HCT116 (cell line): ENCODE measurements at regions of chr1 and their contacts with region 1.

Region 1: DNA sequence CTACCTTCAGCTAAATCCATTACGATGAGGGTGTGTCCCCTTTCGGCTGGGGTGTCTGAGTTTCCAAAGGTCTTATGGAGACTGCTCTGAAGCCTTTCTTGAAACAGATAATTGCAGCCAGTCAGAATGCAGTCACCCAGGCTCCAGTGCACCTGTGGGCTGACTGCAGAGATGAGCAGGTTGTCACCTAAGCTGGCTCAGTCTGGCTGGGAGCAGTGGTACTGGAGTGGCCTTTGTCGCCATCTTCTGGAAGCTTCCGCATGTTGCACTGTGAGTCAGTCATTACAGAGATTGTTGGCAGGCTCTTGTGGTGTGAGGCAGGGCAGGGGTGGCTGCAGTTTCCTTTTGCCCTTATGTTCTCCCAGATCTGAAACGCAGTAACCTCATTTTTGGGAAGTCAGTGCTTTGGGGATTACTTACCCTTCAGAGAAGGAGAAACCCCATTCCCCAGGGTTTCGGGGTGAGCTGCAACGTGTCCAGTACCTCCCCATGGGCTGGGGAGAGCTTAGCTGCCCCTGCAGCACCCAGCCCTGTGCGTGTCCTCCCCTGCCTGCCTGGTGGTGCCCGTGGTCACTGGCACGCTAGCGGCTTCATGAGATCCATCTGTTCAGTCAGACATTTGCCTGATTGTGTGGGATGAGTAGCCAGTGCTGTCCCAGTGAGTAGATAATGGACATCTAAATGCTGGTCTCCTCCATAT is 48.0 kb downstream of the SMYD2 start:
- DNase-seq: peak; percentile 54
- ATAC-seq: peak; percentile 85
- H3K4me3 ChIP-seq: no peak overlapping the region
- H3K27ac ChIP-seq: no peak overlapping the region
- H3K4me1 ChIP-seq: no peaks in the 10 kb centered on the region
- H3K27me3 ChIP-seq: no peaks in the 10 kb centered on the region
- CTCF ChIP-seq: peak; percentile 84 to 91 (median 87)
- POLR2A ChIP-seq: no peak
- RAD21 ChIP-seq: peak; percentile 97

Region 2: GRCh38 chr1:213244664-213245091 is 1084.2 kb before region 1 on chr1:
- CTCF ChIA-PET with region 1: no interaction called
- POLR2A ChIA-PET with region 1: no interaction called
- RAD21 ChIA-PET with region 1: no interaction called
- intact Hi-C with region 1: loop called (anchors 5 kb)
- DNase-seq: peak; percentile 13
- ATAC-seq: no peak
- H3K4me3 ChIP-seq: no peak overlapping the region
- H3K27ac ChIP-seq: no peak overlapping the region
- H3K4me1 ChIP-seq: no peaks in the 10 kb centered on the region
- H3K27me3 ChIP-seq: no peaks in the 10 kb centered on the region
- CTCF ChIP-seq: peak; percentile 54 to 82 (median 62); a peak in 5 of 6 replicates
- POLR2A ChIP-seq: no peak
- RAD21 ChIP-seq: peak; percentile 77

Region 3: DNA sequence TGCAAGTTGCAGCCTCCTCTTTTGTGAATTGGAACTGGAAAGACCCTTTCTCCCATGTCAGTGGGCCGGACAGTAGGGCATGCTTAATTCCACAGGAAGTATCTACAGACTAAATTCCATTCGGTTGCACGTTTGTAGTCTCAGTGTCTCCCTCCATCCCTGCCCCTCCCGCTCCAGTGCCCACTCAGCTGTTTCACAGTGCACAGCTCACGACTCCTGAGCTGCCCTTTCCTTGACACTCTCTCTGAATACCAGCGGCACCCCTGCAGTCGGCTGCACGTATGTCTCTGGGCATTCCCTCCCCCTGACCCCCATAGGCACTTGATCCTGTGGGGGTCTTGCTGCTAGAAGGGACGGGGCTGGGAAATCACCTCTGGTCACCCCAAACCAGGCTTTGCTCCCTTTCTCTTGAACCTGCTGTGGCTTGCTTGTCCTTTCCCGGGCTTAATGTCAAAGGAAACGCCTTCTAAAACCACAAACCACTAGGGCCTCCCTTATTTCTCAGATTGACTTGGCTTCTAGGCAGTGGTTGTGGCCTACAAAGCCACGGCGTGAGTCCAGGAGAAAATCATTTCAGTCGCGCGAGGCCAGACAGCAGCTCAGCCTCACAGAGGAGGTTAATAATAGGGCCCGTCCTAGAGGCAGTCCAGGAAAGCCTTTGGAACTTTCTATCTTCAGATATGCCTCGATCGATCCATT is 706.4 kb before region 1 on chr1:
- CTCF ChIA-PET with region 1: no interaction called
- POLR2A ChIA-PET with region 1: no interaction called
- RAD21 ChIA-PET with region 1: no interaction called
- intact Hi-C with region 1: no loop called
- DNase-seq: no peak
- ATAC-seq: no peak
- H3K4me3 ChIP-seq: no peak overlapping the region
- H3K27ac ChIP-seq: no peak overlapping the region
- H3K4me1 ChIP-seq: no peaks in the 10 kb centered on the region
- H3K27me3 ChIP-seq: no peaks in the 10 kb centered on the region
- CTCF ChIP-seq: no peak
- POLR2A ChIP-seq: no peak
- RAD21 ChIP-seq: no peak

Region 4: DNA sequence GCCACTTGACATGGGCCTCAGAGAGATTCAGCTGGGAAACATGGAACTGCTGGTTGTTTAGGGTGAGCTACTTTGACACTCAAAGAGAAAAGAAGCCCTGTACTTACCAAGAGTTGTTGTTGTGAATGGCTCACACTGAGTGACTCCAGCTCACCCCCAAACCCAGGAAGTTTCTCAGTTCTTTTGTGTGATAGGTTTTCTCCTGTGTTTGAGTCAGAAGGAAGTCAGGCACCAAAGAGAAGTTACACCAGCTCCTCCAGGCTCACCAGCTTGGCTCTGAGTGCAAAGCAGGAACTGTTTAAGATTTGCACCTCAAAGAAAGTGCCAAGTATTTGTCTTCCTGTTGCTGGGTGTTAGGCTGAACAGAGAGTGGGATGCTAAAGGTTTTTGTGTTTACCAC is 452.4 kb before region 1 on chr1:
- CTCF ChIA-PET with region 1: no interaction called
- POLR2A ChIA-PET with region 1: no interaction called
- RAD21 ChIA-PET with region 1: no interaction called
- intact Hi-C with region 1: no loop called
- DNase-seq: no peak
- ATAC-seq: no peak
- H3K4me3 ChIP-seq: no peak overlapping the region
- H3K27ac ChIP-seq: no peak overlapping the region
- H3K4me1 ChIP-seq: no peaks in the 10 kb centered on the region
- H3K27me3 ChIP-seq: no peaks in the 10 kb centered on the region
- CTCF ChIP-seq: no peak
- POLR2A ChIP-seq: no peak
- RAD21 ChIP-seq: no peak

Region 5: DNA sequence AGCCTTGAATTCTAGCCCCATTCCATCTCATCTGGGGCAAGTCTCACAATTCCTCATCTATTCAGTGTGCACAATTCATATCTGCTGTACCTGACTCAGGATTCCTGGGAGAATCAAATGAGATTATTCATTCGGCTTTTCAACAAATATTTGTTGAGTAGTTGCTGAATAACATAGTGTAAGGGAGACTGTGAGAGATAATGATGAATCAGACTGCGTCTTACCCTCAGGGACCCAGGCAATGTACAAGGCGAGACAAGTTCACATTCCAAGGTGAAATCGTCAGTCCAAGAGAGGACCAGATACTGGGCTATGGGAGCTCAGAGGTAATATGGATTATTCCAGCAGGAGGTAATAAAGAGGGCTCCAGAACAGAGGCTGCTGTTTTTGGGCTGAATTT is 115.8 kb before region 1 on chr1:
- CTCF ChIA-PET with region 1: interaction called, 210 read pairs
- POLR2A ChIA-PET with region 1: interaction called, 4 read pairs
- RAD21 ChIA-PET with region 1: interaction called, 20 to 32 read pairs
- intact Hi-C with region 1: loop called (anchors 1 kb)
- DNase-seq: no peak
- ATAC-seq: no peak
- H3K4me3 ChIP-seq: no peak overlapping the region
- H3K27ac ChIP-seq: no peak overlapping the region
- H3K4me1 ChIP-seq: peaks cover 0 to 4% of the 10 kb centered on the region in 2 experiments; a peak in 1 of 4 replicates
- H3K27me3 ChIP-seq: peaks cover 7% of the 10 kb centered on the region
- CTCF ChIP-seq: no peak
- POLR2A ChIP-seq: no peak
- RAD21 ChIP-seq: no peak

Region 6: DNA sequence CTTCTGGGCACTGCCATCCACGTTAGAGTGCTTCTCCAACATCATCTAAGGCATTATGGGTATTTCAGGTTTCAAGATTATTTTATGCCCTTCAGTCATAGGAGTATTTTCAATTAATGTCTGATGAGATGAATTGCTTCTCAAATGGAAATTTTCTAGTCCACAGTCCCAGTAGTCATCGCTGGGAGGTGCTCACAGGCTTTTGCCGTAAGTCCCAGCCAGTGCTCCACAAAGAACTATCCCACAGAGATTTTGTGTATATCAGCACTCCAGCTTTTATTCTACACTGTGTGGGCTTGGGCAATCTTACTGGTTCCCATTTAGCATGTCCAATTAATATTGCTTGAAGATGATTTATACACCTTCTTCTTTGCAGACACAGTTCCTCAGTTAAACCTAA is 13.0 kb after region 1 on chr1:
- CTCF ChIA-PET with region 1: interaction called, 10 read pairs
- POLR2A ChIA-PET with region 1: no interaction called
- RAD21 ChIA-PET with region 1: no interaction called
- intact Hi-C with region 1: no loop called
- DNase-seq: no peak
- ATAC-seq: no peak
- H3K4me3 ChIP-seq: no peak overlapping the region
- H3K27ac ChIP-seq: no peak overlapping the region
- H3K4me1 ChIP-seq: no peaks in the 10 kb centered on the region
- H3K27me3 ChIP-seq: no peaks in the 10 kb centered on the region
- CTCF ChIP-seq: no peak
- POLR2A ChIP-seq: no peak
- RAD21 ChIP-seq: no peak

Region 7: GRCh38 chr1:214551436-214552173 is 222.7 kb after region 1 on chr1 and contains the start of gene PTPN14:
- CTCF ChIA-PET with region 1: interaction called, 13 read pairs
- POLR2A ChIA-PET with region 1: no interaction called
- RAD21 ChIA-PET with region 1: no interaction called
- intact Hi-C with region 1: no loop called
- DNase-seq: peak; percentile 85
- ATAC-seq: peak; percentile 83
- H3K4me3 ChIP-seq: peak within 1 kb of the TSS; percentile 80 to 93
- H3K27ac ChIP-seq: peak within 1 kb of the TSS; percentile 87
- H3K4me1 ChIP-seq: peaks cover 30 to 39% of the 10 kb centered on the region in 2 experiments
- H3K27me3 ChIP-seq: no peaks in the 10 kb centered on the region
- CTCF ChIP-seq: peak in 2 of 3 experiments; percentile 25 to 33; a peak in 3 of 6 replicates
- POLR2A ChIP-seq: no peak
- RAD21 ChIP-seq: 0 out of 2 replicates have a peak, but pooled peaks have one; percentile 19
- total RNA-seq, gene PTPN14: 37.5 TPM

Region 8: GRCh38 chr1:214632091-214632490 is 303.2 kb after region 1 on chr1:
- CTCF ChIA-PET with region 1: interaction called, 50 read pairs
- POLR2A ChIA-PET with region 1: no interaction called
- RAD21 ChIA-PET with region 1: no interaction called
- intact Hi-C with region 1: loop called (anchors 2 kb)
- DNase-seq: no peak
- ATAC-seq: no peak
- H3K4me3 ChIP-seq: no peak overlapping the region
- H3K27ac ChIP-seq: no peak overlapping the region
- H3K4me1 ChIP-seq: no peaks in the 10 kb centered on the region
- H3K27me3 ChIP-seq: no peaks in the 10 kb centered on the region
- CTCF ChIP-seq: no peak
- POLR2A ChIP-seq: no peak
- RAD21 ChIP-seq: no peak